Activated B cell treated with CpG ODN at 0.5 μM for 24 hours (primary cell): ENCODE measurements at regions of chrX and their contacts with region 1.

Region 1: GRCh38 chrX:40153335-40154249 is 55.8 kb upstream of the BCOR start:
- DNase-seq: peak; percentile 57
- ATAC-seq: peak; percentile 76
- H3K4me3 Mint-ChIP-seq: peak overlapping the region; percentile 80
- H3K27ac Mint-ChIP-seq: peak overlapping the region; percentile 77
- H3K4me1 Mint-ChIP-seq: peaks cover 38% of the 10 kb centered on the region
- H3K27me3 Mint-ChIP-seq: no peaks in the 10 kb centered on the region
- CTCF ChIP-seq: no peak

Region 2: DNA sequence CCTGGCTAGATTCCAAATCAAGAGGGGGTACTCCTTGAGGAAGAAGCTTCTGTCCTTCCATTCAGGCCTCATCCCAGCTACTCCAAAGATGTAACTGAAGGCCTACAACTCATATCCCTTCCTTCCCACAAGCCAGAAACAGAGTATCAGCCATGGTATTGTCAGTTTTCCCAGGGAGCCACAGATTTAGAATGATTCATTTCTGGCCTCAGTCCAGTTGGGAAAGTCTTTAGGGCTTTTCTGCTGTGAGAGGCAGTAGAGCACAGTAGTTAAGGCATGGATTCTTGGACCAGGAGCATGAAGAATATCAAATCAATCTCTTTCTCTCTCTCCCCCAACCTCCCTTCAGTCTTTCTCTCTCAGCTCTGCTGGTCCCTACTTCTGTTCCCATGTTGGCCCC is 560.8 kb before region 1 on chrX:
- CTCF ChIA-PET with region 1: no interaction called
- POLR2A ChIA-PET with region 1: no interaction called
- intact Hi-C with region 1: no loop called
- DNase-seq: no peak
- ATAC-seq: no peak
- H3K4me3 Mint-ChIP-seq: no peak overlapping the region
- H3K27ac Mint-ChIP-seq: no peak overlapping the region
- H3K4me1 Mint-ChIP-seq: no peaks in the 10 kb centered on the region
- H3K27me3 Mint-ChIP-seq: no peaks in the 10 kb centered on the region
- CTCF ChIP-seq: no peak

Region 3: GRCh38 chrX:39814391-39814790 is 339.2 kb before region 1 on chrX:
- CTCF ChIA-PET with region 1: no interaction called
- POLR2A ChIA-PET with region 1: interaction called, 3 read pairs
- intact Hi-C with region 1: loop called (anchors 5 kb)
- DNase-seq: no peak
- ATAC-seq: no peak
- H3K4me3 Mint-ChIP-seq: no peak overlapping the region
- H3K27ac Mint-ChIP-seq: no peak overlapping the region
- H3K4me1 Mint-ChIP-seq: peaks cover 8% of the 10 kb centered on the region
- H3K27me3 Mint-ChIP-seq: peaks cover 11% of the 10 kb centered on the region
- CTCF ChIP-seq: no peak

Region 4: DNA sequence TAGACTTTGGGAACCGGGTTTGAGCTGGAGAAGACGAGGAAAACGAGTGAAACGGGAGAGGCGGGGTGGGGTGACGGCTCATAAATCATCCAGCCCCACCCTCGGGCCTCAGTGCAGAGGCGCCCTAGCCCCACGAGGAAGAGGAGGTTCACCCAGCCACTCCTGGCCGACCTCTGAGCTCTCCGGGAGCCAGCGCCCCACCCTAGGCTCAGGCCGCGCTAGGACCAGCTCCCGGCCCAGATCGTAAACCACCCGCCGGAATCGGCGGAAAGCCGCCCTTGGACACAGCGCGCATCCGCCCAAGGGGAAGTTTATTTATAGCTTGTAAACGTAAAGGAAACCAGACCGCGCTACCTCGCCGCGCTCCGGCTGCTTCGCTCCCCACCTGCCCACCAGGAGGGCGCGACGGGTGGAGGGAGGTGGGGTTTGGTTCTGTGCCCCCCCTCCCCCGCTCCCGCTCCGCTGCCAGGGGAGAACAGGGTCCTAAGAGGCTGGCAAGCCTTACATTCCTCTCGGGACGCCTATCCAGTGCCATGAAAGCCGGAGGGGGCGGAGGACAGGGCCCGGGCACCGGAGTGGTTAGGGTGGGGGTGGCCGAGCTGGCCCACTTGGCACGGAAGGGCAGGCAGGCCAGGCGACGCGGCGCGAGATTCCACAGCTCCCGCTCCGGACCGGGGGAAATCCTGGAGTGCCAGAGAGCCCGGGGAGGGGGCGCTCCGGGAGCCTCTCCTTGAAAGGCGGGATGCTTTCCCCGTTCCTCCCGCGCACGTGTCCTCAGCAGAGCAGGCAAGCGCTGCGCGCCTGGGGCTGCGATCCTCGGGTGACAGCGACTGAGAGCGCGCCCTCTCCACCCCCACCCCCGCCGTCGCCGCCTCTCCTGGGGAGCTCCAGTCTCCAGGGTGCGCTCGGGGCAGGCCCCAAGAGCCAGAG is 140.1 kb before region 1 on chrX:
- CTCF ChIA-PET with region 1: no interaction called
- POLR2A ChIA-PET with region 1: interaction called, 17 read pairs
- intact Hi-C with region 1: loop called (anchors 2 kb)
- DNase-seq: peak; percentile 41
- ATAC-seq: peak; percentile 47
- H3K4me3 Mint-ChIP-seq: peak overlapping the region; percentile 76
- H3K27ac Mint-ChIP-seq: peak overlapping the region; percentile 56
- H3K4me1 Mint-ChIP-seq: peaks cover 26% of the 10 kb centered on the region
- H3K27me3 Mint-ChIP-seq: no peaks in the 10 kb centered on the region
- CTCF ChIP-seq: no peak

Region 5: DNA sequence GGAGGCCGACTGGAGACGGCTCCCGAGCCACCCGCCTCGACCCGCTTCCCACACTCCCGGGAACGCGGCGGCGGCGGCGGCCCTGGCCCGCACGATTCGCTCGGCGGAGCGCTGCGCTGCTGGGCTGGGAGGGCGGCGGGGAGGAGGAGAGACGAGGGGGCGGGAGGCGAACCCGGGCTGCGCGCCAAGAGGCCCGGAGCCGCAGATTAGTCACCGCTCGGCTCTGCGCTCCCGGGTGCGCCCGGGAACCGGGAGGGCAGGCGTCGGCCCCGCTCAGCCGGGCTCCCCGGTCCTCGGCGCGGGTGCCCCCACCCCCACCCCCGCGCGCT is 44.7 kb before region 1 on chrX:
- CTCF ChIA-PET with region 1: no interaction called
- POLR2A ChIA-PET with region 1: interaction called, 41 read pairs
- intact Hi-C with region 1: loop called (anchors 2 kb)
- DNase-seq: peak; percentile 44
- ATAC-seq: peak; percentile 29
- H3K4me3 Mint-ChIP-seq: peak overlapping the region; percentile 64
- H3K27ac Mint-ChIP-seq: no peak overlapping the region
- H3K4me1 Mint-ChIP-seq: peaks cover 18% of the 10 kb centered on the region
- H3K27me3 Mint-ChIP-seq: no peaks in the 10 kb centered on the region
- CTCF ChIP-seq: no peak